T-cell (primary cell): ENCODE measurements at regions of chr5 and their contacts with region 1.

Region 1: GRCh38 chr5:141557681-141558136 is 61.1 kb downstream of the DIAPH1 start:
- DNase-seq: peak; percentile 40 to 89 (median 72)
- ATAC-seq: peak; percentile 67 to 84 (median 72)
- H3K4me3 ChIP-seq: no peak overlapping the region
- H3K4me3 Mint-ChIP-seq: no peak overlapping the region
- H3K27ac ChIP-seq: peak overlapping the region; percentile 49
- H3K27ac Mint-ChIP-seq: peak overlapping the region; percentile 76 to 81
- H3K4me1 ChIP-seq: peaks cover 4 to 11% of the 10 kb centered on the region in 2 experiments
- H3K4me1 Mint-ChIP-seq: peaks cover 29 to 36% (median 29%) of the 10 kb centered on the region in 3 donors
- H3K27me3 ChIP-seq: no peaks in the 10 kb centered on the region
- H3K27me3 Mint-ChIP-seq: no peaks in the 10 kb centered on the region

Region 2: DNA sequence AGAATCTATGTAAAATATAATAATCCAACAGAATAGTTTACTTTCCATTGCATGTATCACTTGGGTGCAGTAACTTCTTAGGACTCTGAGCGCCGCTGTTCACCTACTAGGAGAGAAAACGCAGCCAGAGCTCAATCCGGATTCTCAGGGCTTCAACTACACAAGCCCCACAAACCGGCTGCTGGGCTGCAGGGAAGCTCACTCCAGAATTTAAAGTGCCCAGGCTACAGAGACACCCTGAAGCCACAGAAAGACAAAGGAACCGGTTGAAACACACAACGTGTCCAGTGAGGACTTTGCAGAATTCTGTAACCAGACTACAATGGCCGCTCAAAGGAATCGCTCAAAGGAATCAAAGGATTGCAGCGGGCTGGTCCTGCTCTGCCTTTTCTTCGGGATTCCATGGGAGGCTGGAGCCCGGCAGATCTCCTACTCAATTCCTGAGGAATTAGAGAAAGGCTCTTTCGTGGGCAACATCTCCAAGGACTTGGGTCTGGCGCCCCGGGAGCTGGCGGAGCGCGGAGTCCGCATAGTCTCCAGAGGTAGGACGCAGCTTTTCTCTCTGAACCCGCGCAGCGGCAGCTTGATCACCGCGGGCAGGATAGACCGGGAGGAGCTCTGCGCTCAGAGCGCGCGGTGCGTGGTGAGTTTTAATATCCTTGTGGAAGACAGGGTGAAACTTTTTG is 144.7 kb before region 1 on chr5 and contains the start of gene PCDHGA10:
- CTCF ChIA-PET with region 1: interaction called in 1 of 2 experiments, 29 read pairs
- POLR2A ChIA-PET with region 1: interaction called in 1 of 2 experiments, 8 read pairs
- DNase-seq: peak in 32 of 35 experiments; percentile 15 to 69 (median 46)
- ATAC-seq: peak; percentile 78 to 84 (median 82)
- H3K4me3 ChIP-seq: peak within 1 kb of the TSS; percentile 41 to 68
- H3K4me3 Mint-ChIP-seq: peak within 1 kb of the TSS; percentile 77 to 85 (median 78)
- H3K27ac ChIP-seq: no peak within 1 kb of the TSS
- H3K27ac Mint-ChIP-seq: peak within 1 kb of the TSS; percentile 34
- H3K4me1 ChIP-seq: peaks cover 0 to 18% of the 10 kb centered on the region in 2 experiments
- H3K4me1 Mint-ChIP-seq: peaks cover 22 to 35% (median 23%) of the 10 kb centered on the region in 3 donors
- H3K27me3 ChIP-seq: peaks cover 15 to 63% of the 10 kb centered on the region in 2 experiments
- H3K27me3 Mint-ChIP-seq: peaks cover 57 to 80% of the 10 kb centered on the region in 2 donors
- total RNA-seq, gene PCDHGA10: 0.10 to 0.53 (median 0.32) TPM

Region 3: DNA sequence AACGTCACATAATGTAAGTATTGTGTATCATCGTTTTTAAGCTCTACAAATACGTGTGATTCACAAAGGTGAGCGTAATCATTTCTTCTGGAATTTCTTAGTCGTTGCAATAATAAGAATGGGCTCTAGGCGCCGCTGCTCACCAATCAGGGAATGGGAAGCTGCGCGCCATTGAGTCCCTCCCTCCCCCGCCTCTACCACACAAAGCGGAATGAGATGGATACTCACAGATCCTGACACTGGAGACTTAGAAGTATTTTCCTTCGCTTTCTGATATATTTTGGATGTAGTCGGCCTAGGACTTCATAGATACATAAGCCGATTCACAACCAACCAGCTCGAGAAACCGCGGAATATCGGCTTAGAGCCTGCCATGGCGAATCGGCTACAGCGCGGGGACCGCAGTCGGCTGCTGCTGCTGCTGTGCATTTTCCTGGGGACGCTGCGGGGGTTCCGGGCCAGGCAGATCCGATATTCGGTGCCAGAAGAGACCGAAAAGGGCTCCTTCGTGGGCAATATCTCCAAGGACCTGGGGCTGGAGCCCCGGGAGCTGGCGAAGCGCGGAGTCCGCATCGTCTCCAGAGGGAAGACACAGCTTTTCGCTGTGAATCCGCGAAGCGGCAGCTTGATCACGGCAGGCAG is 136.7 kb before region 1 on chr5 and contains the start of gene PCDHGA11:
- CTCF ChIA-PET with region 1: interaction called in 1 of 2 experiments, 11 read pairs
- POLR2A ChIA-PET with region 1: no interaction called
- DNase-seq: peak in 4 of 35 experiments; percentile 21 to 47 (median 28)
- ATAC-seq: peak in 1 of 4 experiments; percentile 40
- H3K4me3 ChIP-seq: peak within 1 kb of the TSS; percentile 28 to 62
- H3K4me3 Mint-ChIP-seq: peak within 1 kb of the TSS; percentile 52 to 76 (median 70)
- H3K27ac ChIP-seq: no peak within 1 kb of the TSS
- H3K27ac Mint-ChIP-seq: peak within 1 kb of the TSS in 1 of 2 donors; percentile 55
- H3K4me1 ChIP-seq: peaks cover 0 to 15% of the 10 kb centered on the region in 2 experiments
- H3K4me1 Mint-ChIP-seq: peaks cover 3 to 13% (median 7%) of the 10 kb centered on the region in 3 donors
- H3K27me3 ChIP-seq: peaks cover 28 to 55% of the 10 kb centered on the region in 2 experiments
- H3K27me3 Mint-ChIP-seq: peaks cover 62 to 78% of the 10 kb centered on the region in 2 donors
- total RNA-seq, gene PCDHGA11: 0.06 to 0.44 (median 0.11) TPM in 4 of 5 donors, not detected in the other

Region 4: DNA sequence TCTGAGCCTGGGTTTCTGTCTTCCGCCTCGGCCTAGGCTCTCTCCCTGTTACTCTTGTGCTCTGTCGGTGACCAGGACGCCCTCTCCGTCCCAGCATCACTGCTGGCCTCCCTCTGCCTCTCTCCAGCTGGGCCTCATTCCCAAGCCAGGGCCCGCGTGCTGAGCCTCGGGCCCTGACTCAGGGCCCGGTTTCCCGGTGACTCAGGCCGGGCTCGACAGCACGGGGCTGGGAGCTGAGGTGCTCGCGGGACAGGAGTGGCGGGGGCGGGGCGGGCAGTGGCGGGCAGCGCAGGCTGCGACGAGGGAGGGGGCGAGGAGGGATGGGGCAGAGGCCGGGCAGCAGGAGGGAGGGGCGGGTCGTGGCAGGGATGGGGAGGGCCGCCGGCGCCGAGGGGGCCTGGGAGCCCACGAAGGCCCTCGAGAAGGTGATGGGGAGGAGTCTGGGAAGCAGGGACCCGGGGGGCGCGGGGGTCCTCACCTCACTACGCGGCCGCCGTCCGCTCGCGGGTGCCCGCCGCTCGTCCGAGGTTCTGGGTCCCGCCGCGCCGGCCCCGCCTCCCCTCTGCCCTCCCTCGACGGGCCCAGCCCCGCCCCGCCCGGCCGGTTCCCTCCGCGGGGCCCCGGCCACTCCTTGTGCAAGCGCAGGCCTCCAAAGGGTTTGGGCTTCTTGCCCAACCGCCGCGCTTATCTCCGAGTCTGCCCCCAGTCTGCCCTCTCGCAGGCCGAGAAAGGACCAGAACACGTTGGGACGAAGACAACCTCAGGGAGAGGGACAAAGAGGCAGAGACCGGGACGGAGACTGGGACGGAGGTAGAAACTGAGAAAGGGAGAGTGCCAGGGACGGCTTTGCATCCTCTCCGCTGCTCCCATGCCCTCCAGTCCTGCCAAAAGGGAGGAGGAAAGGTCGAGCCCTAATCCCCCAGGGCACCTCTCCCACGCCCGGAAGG is 124.3 kb after region 1 on chr5 and contains the start of gene ARAP3:
- CTCF ChIA-PET with region 1: no interaction called
- POLR2A ChIA-PET with region 1: no interaction called
- DNase-seq: peak in 21 of 35 experiments; percentile 9 to 58 (median 26)
- ATAC-seq: peak; percentile 43 to 67 (median 60)
- H3K4me3 ChIP-seq: peak within 1 kb of the TSS; percentile 53 to 67
- H3K4me3 Mint-ChIP-seq: peak within 1 kb of the TSS; percentile 64 to 83 (median 76)
- H3K27ac ChIP-seq: peak within 1 kb of the TSS; percentile 34
- H3K27ac Mint-ChIP-seq: peak within 1 kb of the TSS; percentile 75 to 89
- H3K4me1 ChIP-seq: peaks cover 14 to 37% of the 10 kb centered on the region in 2 experiments
- H3K4me1 Mint-ChIP-seq: peaks cover 26 to 36% (median 27%) of the 10 kb centered on the region in 3 donors
- H3K27me3 ChIP-seq: peaks cover 0 to under 1% of the 10 kb centered on the region in 2 experiments
- H3K27me3 Mint-ChIP-seq: peaks cover 0 to 3% of the 10 kb centered on the region in 2 donors
- total RNA-seq, gene ARAP3: 1.2 to 25.6 (median 20.5) TPM

Region 5: GRCh38 chr5:142222866-142223558 is 665.3 kb after region 1 on chr5:
- CTCF ChIA-PET with region 1: no interaction called
- POLR2A ChIA-PET with region 1: no interaction called
- DNase-seq: peak in 4 of 35 experiments; percentile 3 to 8 (median 6)
- ATAC-seq: peak in 1 of 4 experiments; percentile 0
- H3K4me3 ChIP-seq: no peak overlapping the region
- H3K4me3 Mint-ChIP-seq: peak overlapping the region in 2 of 3 donors; percentile 57 to 60
- H3K27ac ChIP-seq: peak overlapping the region; percentile 59
- H3K27ac Mint-ChIP-seq: peak overlapping the region; percentile 75 to 89
- H3K4me1 ChIP-seq: peaks cover 5 to 26% of the 10 kb centered on the region in 2 experiments
- H3K4me1 Mint-ChIP-seq: peaks cover 37 to 41% (median 37%) of the 10 kb centered on the region in 3 donors
- H3K27me3 ChIP-seq: peaks cover 0 to 3% of the 10 kb centered on the region in 2 experiments
- H3K27me3 Mint-ChIP-seq: no peaks in the 10 kb centered on the region